ENCODE measurements at regions of chr18 and their contacts with region 1.

Region 1: GRCh38 chr18:74414953-74415515 is 42.1 kb downstream of the DIPK1C start:
- DNase-seq: no peak
- ATAC-seq: no peak
- H3K4me3 Mint-ChIP-seq: no peak overlapping the region
- H3K27ac Mint-ChIP-seq: no peak overlapping the region
- H3K4me1 Mint-ChIP-seq: no peaks in the 10 kb centered on the region
- H3K27me3 Mint-ChIP-seq: peaks cover under 1% of the 10 kb centered on the region

Region 2: GRCh38 chr18:74457043-74457724 is 42.1 kb after region 1 on chr18 and contains the start of gene DIPK1C:
- CTCF ChIA-PET with region 1: no interaction called
- POLR2A ChIA-PET with region 1: interaction called, 12 read pairs
- intact Hi-C with region 1: no loop called
- DNase-seq: peak; percentile 16
- ATAC-seq: peak; percentile 42
- H3K4me3 Mint-ChIP-seq: peak within 1 kb of the TSS; percentile 43
- H3K27ac Mint-ChIP-seq: no peak within 1 kb of the TSS
- H3K4me1 Mint-ChIP-seq: peaks cover 4% of the 10 kb centered on the region
- H3K27me3 Mint-ChIP-seq: peaks cover 31% of the 10 kb centered on the region
- total RNA-seq, gene DIPK1C: not detected

Measured in activated CD4-positive, alpha-beta T cell treated with anti-CD3 and anti-CD28 coated beads for 36 hours (primary cell).